ENCODE measurements at regions of chr14 and their contacts with region 1.

Region 1: DNA sequence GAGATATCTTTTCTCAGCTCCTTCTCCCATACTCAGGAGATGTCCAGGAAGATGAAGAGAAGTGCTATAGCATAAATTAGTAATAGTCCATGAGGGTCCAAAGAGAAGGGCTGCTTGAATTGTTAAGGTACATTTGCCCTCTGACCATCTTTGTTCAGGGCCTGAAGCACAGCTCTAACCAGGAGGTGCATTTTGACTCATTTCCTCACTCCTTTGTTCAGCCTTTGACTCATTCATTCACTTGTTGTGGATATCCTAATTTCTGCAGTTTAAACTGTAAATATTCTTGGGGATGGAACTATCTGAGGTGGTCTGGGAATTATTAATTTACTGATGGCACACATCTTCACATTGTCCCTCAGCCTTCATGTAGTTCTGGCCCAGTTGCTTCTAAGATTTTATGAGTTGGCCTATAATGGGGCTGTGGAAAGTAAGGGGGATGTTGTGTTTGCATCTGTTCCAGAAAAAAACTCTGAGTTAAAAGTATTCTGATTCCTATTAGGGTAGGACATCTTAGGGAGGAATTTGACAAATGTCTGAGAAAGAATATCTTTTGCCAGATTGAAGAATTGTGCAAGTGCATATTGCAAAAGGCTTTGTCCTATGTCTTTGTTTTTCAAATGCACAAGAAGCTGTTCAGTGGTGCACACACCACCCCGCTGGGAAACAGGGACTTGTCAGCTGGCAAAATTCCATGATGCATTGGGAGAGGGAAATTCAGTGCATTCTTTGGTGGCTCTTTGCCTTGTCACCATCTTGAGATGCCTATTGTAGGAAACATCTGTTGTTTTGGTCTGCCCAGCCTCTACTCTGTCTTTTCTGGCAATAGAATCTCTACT is 22.1 kb downstream of the SMOC1 start:
- DNase-seq: peak; percentile 81
- H3K4me3 ChIP-seq: no peak overlapping the region
- H3K27ac ChIP-seq: peak overlapping the region; percentile 31
- H3K4me1 ChIP-seq: peaks cover 15% of the 10 kb centered on the region
- H3K27me3 ChIP-seq: peaks cover 0 to 2% of the 10 kb centered on the region in 2 experiments
- CTCF ChIP-seq: no peak
- POLR2A ChIP-seq: no peak

Region 2: GRCh38 chr14:69827560-69827959 is 73.8 kb before region 1 on chr14:
- CTCF ChIA-PET with region 1: no interaction called
- POLR2A ChIA-PET with region 1: no interaction called
- dilution Hi-C with region 1: no loop called
- intact Hi-C with region 1: no loop called
- DNase-seq: no peak
- H3K4me3 ChIP-seq: no peak overlapping the region
- H3K27ac ChIP-seq: no peak overlapping the region
- H3K4me1 ChIP-seq: no peaks in the 10 kb centered on the region
- H3K27me3 ChIP-seq: no peaks in the 10 kb centered on the region
- CTCF ChIP-seq: no peak
- POLR2A ChIP-seq: no peak

Region 3: DNA sequence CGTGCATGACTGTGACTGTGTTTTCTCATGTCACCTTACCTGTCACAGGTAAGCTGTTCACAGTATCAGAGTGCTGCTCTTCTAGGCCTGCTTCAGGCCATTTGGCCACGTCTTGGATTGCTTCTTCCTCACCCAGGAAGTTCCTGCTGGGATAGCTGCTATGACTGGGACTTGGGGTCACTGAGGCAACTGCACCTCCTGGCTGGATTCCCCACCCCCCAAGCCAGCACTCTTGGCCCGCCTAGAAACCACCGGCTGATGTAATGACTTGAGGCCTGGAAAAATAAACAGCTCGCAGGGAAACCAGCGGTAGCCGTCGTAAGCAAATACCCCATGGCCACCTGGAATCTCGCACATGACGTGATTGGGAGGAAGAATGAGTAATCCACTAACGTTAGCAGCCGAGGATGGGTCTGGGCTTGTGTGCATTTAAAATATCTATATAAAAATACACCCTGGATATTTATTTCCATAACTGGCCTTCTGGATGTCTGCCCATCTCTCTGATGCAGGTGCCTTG is 97.8 kb after region 1 on chr14:
- CTCF ChIA-PET with region 1: no interaction called
- POLR2A ChIA-PET with region 1: no interaction called
- dilution Hi-C with region 1: no loop called
- intact Hi-C with region 1: loop called (anchors 1 kb)
- DNase-seq: peak; percentile 77
- H3K4me3 ChIP-seq: no peak overlapping the region
- H3K27ac ChIP-seq: no peak overlapping the region
- H3K4me1 ChIP-seq: peaks cover 3% of the 10 kb centered on the region
- H3K27me3 ChIP-seq: peaks cover under 1% of the 10 kb centered on the region in 2 experiments
- CTCF ChIP-seq: no peak
- POLR2A ChIP-seq: no peak